SK-N-SH (cell line): ENCODE measurements at regions of chr22 and their contacts with region 1.

Region 1: GRCh38 chr22:23270212-23270733 is 90.0 kb downstream of the BCR start:
- DNase-seq: no peak
- H3K4me3 ChIP-seq: no peak overlapping the region
- H3K27ac ChIP-seq: no peak overlapping the region
- H3K4me1 ChIP-seq: peaks cover 0 to 27% of the 10 kb centered on the region in 2 experiments; a peak in 1 of 4 replicates
- H3K27me3 ChIP-seq: no peaks in the 10 kb centered on the region
- CTCF ChIP-seq: no peak
- EP300 ChIP-seq: no peak
- RAD21 ChIP-seq: no peak

Region 2: GRCh38 chr22:23178512-23179254 is 91.6 kb before region 1 on chr22:
- CTCF ChIA-PET with region 1: interaction called, 587 read pairs
- POLR2A ChIA-PET with region 1: no interaction called
- DNase-seq: peak; percentile 91
- H3K4me3 ChIP-seq: no peak overlapping the region; a peak in 1 of 4 replicates
- H3K27ac ChIP-seq: no peak overlapping the region
- H3K4me1 ChIP-seq: peaks cover 12 to 41% of the 10 kb centered on the region in 2 experiments
- H3K27me3 ChIP-seq: no peaks in the 10 kb centered on the region
- CTCF ChIP-seq: peak; percentile 96
- EP300 ChIP-seq: no peak
- RAD21 ChIP-seq: peak; percentile 98

Region 3: DNA sequence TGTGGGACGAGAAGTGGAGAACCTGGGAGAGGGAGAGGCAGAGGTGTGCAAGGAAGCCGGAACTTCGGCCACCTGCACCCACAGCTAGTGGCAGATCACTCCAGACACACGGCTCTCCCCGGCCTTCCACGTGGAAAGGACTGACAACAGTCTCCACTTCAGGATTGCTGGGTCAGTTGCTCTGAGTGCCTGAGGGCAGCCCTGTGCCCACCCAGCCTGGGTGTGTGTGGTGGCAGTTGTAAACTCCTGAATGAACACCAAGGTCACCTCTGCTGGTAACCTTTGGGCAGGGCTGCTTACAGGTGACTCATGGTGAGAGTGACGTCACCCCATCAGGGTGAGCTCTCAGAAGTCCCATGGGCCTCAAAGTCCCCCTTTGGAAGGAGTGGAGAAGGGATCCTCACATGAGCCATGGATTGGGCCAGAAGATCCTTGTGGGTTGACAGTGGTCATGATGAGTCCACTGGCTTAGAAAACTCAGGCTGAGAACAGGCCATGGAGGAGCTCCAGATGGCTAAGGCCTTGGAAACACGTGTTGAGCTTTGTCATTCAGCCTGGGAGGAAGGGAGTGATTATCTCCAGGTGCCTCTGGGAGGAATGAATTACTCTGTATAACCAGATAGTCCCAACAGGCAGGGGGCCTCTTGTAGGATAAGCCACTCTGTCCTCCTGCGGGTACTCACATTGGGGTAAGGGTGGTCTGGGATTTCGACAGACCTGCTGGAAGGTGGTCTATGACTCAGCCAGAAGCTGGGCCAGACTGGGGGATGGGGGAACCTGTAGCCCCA is 18.6 kb before region 1 on chr22:
- CTCF ChIA-PET with region 1: interaction called, 10 read pairs
- POLR2A ChIA-PET with region 1: no interaction called
- DNase-seq: no peak
- H3K4me3 ChIP-seq: no peak overlapping the region
- H3K27ac ChIP-seq: no peak overlapping the region; a peak in 1 of 4 replicates
- H3K4me1 ChIP-seq: peaks cover 3 to 37% of the 10 kb centered on the region in 2 experiments; a peak in 2 of 4 replicates
- H3K27me3 ChIP-seq: no peaks in the 10 kb centered on the region
- CTCF ChIP-seq: no peak
- EP300 ChIP-seq: no peak
- RAD21 ChIP-seq: no peak